IMR-90 (cell line): ENCODE measurements at regions of chr19 and their contacts with region 1.

Region 1: DNA sequence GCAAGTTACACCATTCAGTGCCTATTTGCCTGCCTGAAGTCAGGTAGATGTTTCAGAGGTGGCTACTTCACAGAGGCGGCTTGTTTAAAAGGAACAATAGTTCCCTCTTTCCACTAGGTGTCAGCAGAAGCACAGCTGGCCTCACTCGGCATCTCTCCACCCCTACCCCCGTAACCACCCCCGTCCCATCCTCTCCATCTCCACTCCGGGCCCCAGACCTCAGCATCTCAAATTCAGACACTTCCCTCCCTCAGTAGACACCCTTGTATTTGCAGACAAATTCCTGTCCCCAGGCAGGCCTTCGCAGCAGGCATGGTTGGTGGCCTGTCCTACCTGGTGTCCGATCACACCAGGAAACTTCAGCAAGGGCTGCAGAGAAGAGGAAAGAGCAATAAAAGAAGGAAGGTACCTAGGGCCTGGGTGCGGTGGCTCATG is 9.1 kb upstream of the DPP9 start:
- DNase-seq: peak; percentile 57
- ATAC-seq: peak; percentile 98
- H3K4me3 ChIP-seq: no peak overlapping the region
- H3K27ac ChIP-seq: no peak overlapping the region
- H3K4me1 ChIP-seq: peaks cover 2% of the 10 kb centered on the region; the same call in 1 of the 2 replicates
- H3K27me3 ChIP-seq: peaks cover 11% of the 10 kb centered on the region
- CTCF ChIP-seq: peak; percentile 95
- POLR2A ChIP-seq: 0 out of 2 replicates have a peak, but pooled peaks have one; percentile 34
- RAD21 ChIP-seq: peak; percentile 93

Region 2: GRCh38 chr19:4624733-4625362 is 107.8 kb before region 1 on chr19:
- CTCF ChIA-PET with region 1: no interaction called
- POLR2A ChIA-PET with region 1: no interaction called
- dilution Hi-C with region 1: no loop called
- in situ Hi-C with region 1: no loop called
- intact Hi-C with region 1: no loop called
- DNase-seq: peak; percentile 32
- ATAC-seq: peak; percentile 75
- H3K4me3 ChIP-seq: no peak overlapping the region
- H3K27ac ChIP-seq: no peak overlapping the region
- H3K4me1 ChIP-seq: no peaks in the 10 kb centered on the region
- H3K27me3 ChIP-seq: peaks cover 22% of the 10 kb centered on the region
- CTCF ChIP-seq: peak; percentile 35
- POLR2A ChIP-seq: no peak
- RAD21 ChIP-seq: no peak

Region 3: GRCh38 chr19:4791170-4792018 is 58.7 kb after region 1 on chr19 and contains the start of gene FEM1A:
- CTCF ChIA-PET with region 1: interaction called, 17 read pairs
- POLR2A ChIA-PET with region 1: no interaction called
- dilution Hi-C with region 1: no loop called
- in situ Hi-C with region 1: loop called (anchors 5 kb)
- intact Hi-C with region 1: loop called (anchors 1 kb)
- DNase-seq: peak; percentile 100
- ATAC-seq: peak; percentile 99
- H3K4me3 ChIP-seq: peak within 1 kb of the TSS; percentile 66
- H3K27ac ChIP-seq: peak within 1 kb of the TSS; percentile 77
- H3K4me1 ChIP-seq: peaks cover 5% of the 10 kb centered on the region; the same call in 1 of the 2 replicates
- H3K27me3 ChIP-seq: no peaks in the 10 kb centered on the region
- CTCF ChIP-seq: peak; percentile 99
- POLR2A ChIP-seq: peak; percentile 88
- RAD21 ChIP-seq: peak; percentile 90
- total RNA-seq, gene FEM1A: 8.6 and 8.8 TPM in 2 replicates

Region 4: GRCh38 chr19:4803736-4804695 is 71.3 kb after region 1 on chr19:
- CTCF ChIA-PET with region 1: interaction called, 4 read pairs
- POLR2A ChIA-PET with region 1: no interaction called
- dilution Hi-C with region 1: no loop called
- in situ Hi-C with region 1: no loop called
- intact Hi-C with region 1: loop called (anchors 1 kb)
- DNase-seq: peak; percentile 37
- ATAC-seq: peak; percentile 93
- H3K4me3 ChIP-seq: no peak overlapping the region
- H3K27ac ChIP-seq: no peak overlapping the region
- H3K4me1 ChIP-seq: no peaks in the 10 kb centered on the region
- H3K27me3 ChIP-seq: no peaks in the 10 kb centered on the region
- CTCF ChIP-seq: peak; percentile 91
- POLR2A ChIP-seq: no peak
- RAD21 ChIP-seq: peak; percentile 73

Region 5: DNA sequence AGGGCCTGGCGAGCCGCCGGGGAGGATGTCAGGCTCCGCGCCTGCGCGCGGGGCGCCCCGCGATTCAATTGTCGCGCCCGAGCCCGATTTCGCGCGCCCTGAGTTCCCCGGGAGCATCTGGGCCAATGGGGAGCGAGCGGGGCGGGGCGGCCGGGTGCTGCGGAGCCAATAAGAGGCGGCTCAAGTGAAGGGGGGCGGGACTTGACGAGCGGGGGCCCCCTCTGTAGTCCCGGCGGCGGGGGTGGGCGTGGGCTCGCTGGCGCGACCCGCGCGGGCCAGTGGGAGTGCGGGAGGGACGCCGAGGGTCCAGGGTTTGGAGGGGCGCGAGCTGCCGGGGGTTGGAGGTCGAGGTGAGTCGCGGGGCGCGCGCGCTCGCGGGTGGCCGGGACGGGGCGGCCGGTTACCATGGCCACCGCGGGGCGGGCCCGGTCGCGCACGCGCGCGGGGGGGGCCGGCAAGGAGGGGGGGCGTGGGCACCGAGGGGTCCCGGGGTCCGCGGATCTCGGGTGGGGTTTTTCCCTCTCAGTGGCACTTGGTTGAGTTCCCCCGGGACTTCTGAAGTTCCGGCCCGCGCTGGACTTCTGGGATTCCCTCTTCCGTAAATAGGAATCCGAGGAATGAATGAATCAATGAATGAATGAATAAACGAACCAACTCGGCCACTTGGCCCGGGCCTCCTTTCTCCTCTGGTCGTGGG is 177.3 kb after region 1 on chr19:
- CTCF ChIA-PET with region 1: no interaction called
- POLR2A ChIA-PET with region 1: no interaction called
- dilution Hi-C with region 1: no loop called
- in situ Hi-C with region 1: no loop called
- intact Hi-C with region 1: loop called (anchors 1 kb)
- DNase-seq: peak; percentile 79
- ATAC-seq: peak; percentile 79
- H3K4me3 ChIP-seq: peak overlapping the region; percentile 87
- H3K27ac ChIP-seq: peak overlapping the region; percentile 91
- H3K4me1 ChIP-seq: peaks cover 28% of the 10 kb centered on the region
- H3K27me3 ChIP-seq: no peaks in the 10 kb centered on the region
- CTCF ChIP-seq: no peak
- POLR2A ChIP-seq: no peak
- RAD21 ChIP-seq: no peak